ENCODE measurements at regions of chr5 and their contacts with region 1.

Region 1: GRCh38 chr5:64811050-64811640 is 42.4 kb downstream of the CWC27 start:
- DNase-seq: peak; percentile 28
- H3K4me3 ChIP-seq: no peak overlapping the region
- CTCF ChIP-seq: peak; percentile 47

Region 2: DNA sequence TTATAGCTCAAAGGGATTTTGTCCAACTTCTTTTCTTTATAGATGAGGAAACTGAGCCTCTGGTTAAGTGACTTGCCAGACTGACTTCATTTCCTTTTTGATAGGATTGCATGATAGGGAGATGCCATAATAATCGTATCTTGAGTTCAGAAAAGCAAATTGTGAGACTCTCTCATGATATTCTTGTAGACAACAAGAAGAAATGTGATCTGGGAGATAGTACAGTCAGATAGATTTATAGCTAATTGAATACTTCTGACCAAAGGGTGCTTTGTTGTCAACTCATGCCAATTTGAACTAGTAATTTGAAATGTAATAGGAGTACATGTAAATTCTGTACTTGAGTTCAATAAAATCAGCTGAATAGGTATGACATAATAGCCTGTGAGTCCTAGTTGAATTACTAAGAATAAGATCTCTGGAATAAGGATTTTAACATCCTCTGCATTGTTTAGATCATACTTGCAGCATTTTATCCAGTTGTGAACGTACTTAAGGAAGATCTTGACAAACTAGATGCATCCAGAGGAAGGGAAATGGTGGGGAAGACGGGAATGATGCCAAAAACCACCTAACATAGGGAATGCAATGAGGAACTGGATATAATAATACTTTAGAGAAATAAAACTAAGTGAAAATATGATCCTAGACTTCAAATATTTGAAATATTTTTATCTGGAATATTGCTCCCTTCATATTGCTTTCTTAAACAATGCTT is 16.9 kb before region 1 on chr5:
- CTCF ChIA-PET with region 1: interaction called, 12 read pairs
- POLR2A ChIA-PET with region 1: no interaction called
- DNase-seq: no peak
- H3K4me3 ChIP-seq: no peak overlapping the region
- CTCF ChIP-seq: no peak

Region 3: GRCh38 chr5:65262649-65263059 is 451.5 kb after region 1 on chr5:
- CTCF ChIA-PET with region 1: interaction called, 12 read pairs
- POLR2A ChIA-PET with region 1: interaction called, 6 read pairs
- DNase-seq: peak; percentile 87
- H3K4me3 ChIP-seq: no peak overlapping the region
- CTCF ChIP-seq: no peak

Measured in AG04449 (cell line).